ENCODE measurements at regions of chr1 and their contacts with region 1.

Region 1: DNA sequence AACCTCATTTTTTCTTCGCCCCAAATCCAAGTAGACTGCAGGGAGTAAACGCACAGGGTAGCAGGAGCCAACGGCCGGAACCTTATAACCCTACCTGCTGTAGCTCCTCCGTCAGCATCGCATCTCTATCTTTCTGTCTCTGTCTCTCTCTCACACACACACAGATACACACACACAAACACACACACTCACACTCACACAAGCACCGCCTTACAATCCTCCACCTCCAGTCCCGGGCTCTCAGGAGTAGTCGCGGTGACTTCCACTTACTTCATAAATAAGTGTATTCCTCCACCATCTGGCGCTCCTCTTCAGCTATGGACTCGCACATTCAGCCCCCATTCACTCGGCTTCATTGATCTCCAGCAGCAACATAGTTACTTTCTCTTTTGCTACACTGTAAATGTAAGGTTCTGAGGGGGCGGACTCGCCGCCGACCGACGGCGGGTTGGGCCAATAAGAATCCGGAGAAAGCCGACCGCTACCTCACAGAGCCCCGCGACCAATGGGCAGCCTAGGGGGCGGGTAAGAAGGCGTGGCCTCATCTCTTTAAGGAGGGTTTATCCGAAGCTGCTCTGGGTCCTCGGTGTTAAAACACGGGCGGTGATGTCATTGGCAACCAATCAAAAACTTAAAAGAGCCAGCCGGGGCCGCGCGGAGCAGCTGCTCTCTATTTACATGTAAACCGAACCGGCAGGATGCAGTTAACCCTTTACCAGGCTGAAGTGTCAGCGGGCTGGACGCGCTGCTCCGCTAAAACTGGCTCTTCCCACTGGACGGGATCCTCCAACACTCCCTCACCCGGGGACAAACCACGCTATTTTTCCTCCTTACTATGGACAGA is at the start of gene DUSP10:
- DNase-seq: peak; percentile 99
- ATAC-seq: peak; percentile 95
- total RNA-seq, gene DUSP10: 3.2 TPM

Region 2: GRCh38 chr1:221117548-221117951 is 624.4 kb before region 1 on chr1:
- intact Hi-C with region 1: loop called (anchors 5 kb)
- DNase-seq: no peak
- ATAC-seq: peak; percentile 93

Region 3: DNA sequence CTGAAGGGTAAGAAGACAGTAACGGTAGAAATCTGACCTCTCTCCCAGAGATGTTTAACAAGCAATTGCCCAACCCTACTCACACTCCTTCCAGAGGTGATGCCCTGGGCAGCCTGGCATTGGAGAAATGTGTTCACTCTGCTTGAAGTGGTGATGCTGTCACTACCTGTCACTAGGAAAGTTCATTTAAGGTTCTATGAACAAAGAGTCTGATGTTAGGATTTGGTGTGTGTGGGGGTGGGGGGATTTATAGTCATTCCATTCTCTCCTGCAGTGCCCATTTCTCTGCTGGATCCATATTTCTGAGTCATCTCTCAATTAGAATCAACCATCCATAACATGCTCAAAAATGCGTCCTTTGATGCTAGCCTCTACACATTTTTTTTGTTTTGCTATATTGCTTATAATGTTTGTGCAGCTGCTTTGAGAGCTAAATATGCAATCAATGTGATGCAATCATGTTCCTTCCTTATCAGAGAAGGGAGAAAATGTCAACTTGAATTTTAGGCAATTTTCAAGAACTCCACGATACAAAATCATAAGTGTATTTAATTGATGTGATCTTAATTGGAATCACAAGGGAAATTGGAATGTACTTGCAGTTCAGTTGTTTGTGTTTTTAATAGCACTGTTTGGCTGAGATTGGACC is 173.9 kb before region 1 on chr1:
- intact Hi-C with region 1: loop called (anchors 5 kb)
- DNase-seq: no peak
- ATAC-seq: no peak

Region 4: DNA sequence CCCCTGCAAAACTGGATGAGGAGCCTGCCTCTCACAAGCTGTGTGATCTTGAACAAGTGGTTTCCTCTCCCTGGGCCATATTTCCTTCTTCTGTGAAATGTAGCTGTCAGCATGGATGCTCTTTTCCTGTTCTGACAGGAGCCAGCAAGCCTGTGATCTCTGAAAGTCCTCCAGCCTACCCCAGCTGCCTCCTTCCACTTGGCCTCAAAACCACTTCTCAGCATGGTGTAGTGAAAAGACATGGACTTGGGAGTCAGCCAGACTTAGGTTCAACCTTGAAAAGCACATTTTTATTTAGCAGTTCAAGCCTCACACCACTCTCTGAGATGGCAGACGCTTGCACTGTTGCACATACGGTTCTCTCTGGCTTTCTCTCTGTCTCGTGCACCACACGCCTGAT is 292.9 kb after region 1 on chr1:
- intact Hi-C with region 1: loop called (anchors 5 kb)
- DNase-seq: no peak
- ATAC-seq: peak; percentile 38

Measured in Right ventricle myocardium inferior (tissue), 1 donor.